ENCODE measurements at regions of chr15 and their contacts with region 1.

Region 1: GRCh38 chr15:100602064-100602822 is at the starts of genes ASB7 and LINS1:
- DNase-seq: peak; percentile 97
- ATAC-seq: peak; percentile 87
- H3K4me3 Mint-ChIP-seq: no peak within 1 kb of the TSS
- H3K27ac Mint-ChIP-seq: no peak within 1 kb of the TSS
- H3K4me1 Mint-ChIP-seq: peaks cover 46% of the 10 kb centered on the region
- H3K27me3 Mint-ChIP-seq: no peaks in the 10 kb centered on the region
- CTCF ChIP-seq: no peak
- total RNA-seq, gene ASB7: 18.3 and 21.3 TPM in 2 replicates
- total RNA-seq, gene LINS1: 31.9 and 33.3 TPM in 2 replicates

Region 2: GRCh38 chr15:99090011-99090699 is 1512.1 kb before region 1 on chr15:
- CTCF ChIA-PET with region 1: no interaction called
- POLR2A ChIA-PET with region 1: no interaction called
- intact Hi-C with region 1: loop called (anchors 1 kb)
- DNase-seq: peak; percentile 36
- ATAC-seq: peak; percentile 100
- H3K4me3 Mint-ChIP-seq: peak overlapping the region; percentile 52
- H3K27ac Mint-ChIP-seq: peak overlapping the region; percentile 67
- H3K4me1 Mint-ChIP-seq: peaks cover 15% of the 10 kb centered on the region
- H3K27me3 Mint-ChIP-seq: peaks cover 6% of the 10 kb centered on the region
- CTCF ChIP-seq: no peak

Region 3: GRCh38 chr15:99928429-99928981 is 673.7 kb before region 1 on chr15:
- CTCF ChIA-PET with region 1: no interaction called
- POLR2A ChIA-PET with region 1: interaction called, 3 read pairs
- intact Hi-C with region 1: loop called (anchors 2 kb)
- DNase-seq: peak; percentile 85
- ATAC-seq: peak; percentile 92
- H3K4me3 Mint-ChIP-seq: peak overlapping the region; percentile 86
- H3K27ac Mint-ChIP-seq: peak overlapping the region; percentile 78
- H3K4me1 Mint-ChIP-seq: peaks cover 16% of the 10 kb centered on the region
- H3K27me3 Mint-ChIP-seq: peaks cover 4% of the 10 kb centered on the region
- CTCF ChIP-seq: no peak

Region 4: GRCh38 chr15:100580414-100580813 is 21.8 kb before region 1 on chr15:
- CTCF ChIA-PET with region 1: no interaction called
- POLR2A ChIA-PET with region 1: no interaction called
- intact Hi-C with region 1: no loop called
- DNase-seq: no peak
- ATAC-seq: no peak
- H3K4me3 Mint-ChIP-seq: no peak overlapping the region
- H3K27ac Mint-ChIP-seq: no peak overlapping the region
- H3K4me1 Mint-ChIP-seq: peaks cover 5% of the 10 kb centered on the region
- H3K27me3 Mint-ChIP-seq: no peaks in the 10 kb centered on the region
- CTCF ChIP-seq: no peak

Region 5: GRCh38 chr15:100627789-100628395 is 25.6 kb after region 1 on chr15:
- CTCF ChIA-PET with region 1: no interaction called
- POLR2A ChIA-PET with region 1: interaction called, 3 read pairs
- intact Hi-C with region 1: loop called (anchors 2 kb)
- DNase-seq: no peak
- ATAC-seq: peak; percentile 79
- H3K4me3 Mint-ChIP-seq: no peak overlapping the region
- H3K27ac Mint-ChIP-seq: no peak overlapping the region
- H3K4me1 Mint-ChIP-seq: peaks cover 4% of the 10 kb centered on the region
- H3K27me3 Mint-ChIP-seq: no peaks in the 10 kb centered on the region
- CTCF ChIP-seq: peak; percentile 84

Region 6: GRCh38 chr15:100759698-100760356 is 157.6 kb after region 1 on chr15:
- CTCF ChIA-PET with region 1: no interaction called
- POLR2A ChIA-PET with region 1: no interaction called
- intact Hi-C with region 1: no loop called
- DNase-seq: no peak
- ATAC-seq: no peak
- H3K4me3 Mint-ChIP-seq: no peak overlapping the region
- H3K27ac Mint-ChIP-seq: no peak overlapping the region
- H3K4me1 Mint-ChIP-seq: no peaks in the 10 kb centered on the region
- H3K27me3 Mint-ChIP-seq: peaks cover 34% of the 10 kb centered on the region
- CTCF ChIP-seq: no peak

Region 7: GRCh38 chr15:100958326-100959065 is 356.3 kb after region 1 on chr15:
- CTCF ChIA-PET with region 1: no interaction called
- POLR2A ChIA-PET with region 1: no interaction called
- intact Hi-C with region 1: no loop called
- DNase-seq: no peak
- ATAC-seq: no peak
- H3K4me3 Mint-ChIP-seq: no peak overlapping the region
- H3K27ac Mint-ChIP-seq: no peak overlapping the region
- H3K4me1 Mint-ChIP-seq: peaks cover 30% of the 10 kb centered on the region
- H3K27me3 Mint-ChIP-seq: no peaks in the 10 kb centered on the region
- CTCF ChIP-seq: no peak

Region 8: DNA sequence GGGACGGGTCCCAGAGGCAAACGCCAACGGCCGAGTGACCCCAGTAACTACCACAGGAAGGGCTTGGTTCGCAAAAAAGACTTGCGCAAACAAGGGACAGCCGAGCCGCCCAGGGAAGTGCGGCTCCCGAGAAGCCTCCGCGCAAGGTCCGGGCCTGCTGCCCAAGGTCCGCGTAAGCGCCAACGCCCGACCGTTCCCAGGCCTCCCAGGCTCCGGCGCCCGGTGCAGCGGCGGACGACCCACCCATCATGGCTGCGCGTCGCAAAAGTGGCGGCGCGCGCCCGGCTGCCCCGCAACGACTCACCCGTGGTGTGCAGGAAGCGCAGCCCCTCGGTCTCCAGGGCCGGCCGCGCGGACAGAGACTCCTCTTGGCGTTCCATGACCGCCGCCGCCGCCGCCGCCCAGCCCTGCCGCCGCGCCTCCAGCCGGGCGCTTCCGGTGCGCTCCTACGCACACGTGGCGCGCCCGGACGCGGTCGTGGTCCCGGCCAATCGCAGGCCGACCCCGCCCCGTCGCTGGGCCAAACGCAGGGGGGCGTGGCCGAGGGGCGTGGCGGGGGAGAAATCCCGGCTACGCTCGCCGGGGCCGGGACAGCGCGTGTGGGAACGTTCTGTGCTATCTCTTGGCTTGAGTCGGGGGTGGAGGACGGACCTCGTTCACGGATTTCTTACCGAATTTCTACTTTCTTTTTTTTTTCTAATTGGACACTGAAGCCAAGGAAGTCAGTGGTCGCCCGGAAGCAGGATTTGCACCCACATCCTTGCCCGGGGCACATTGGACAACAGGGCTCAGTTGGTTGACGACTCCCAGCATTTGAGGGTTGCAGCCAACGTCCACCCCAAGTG is 675.0 kb after region 1 on chr15 and contains the start of gene SELENOS:
- CTCF ChIA-PET with region 1: no interaction called
- POLR2A ChIA-PET with region 1: no interaction called
- intact Hi-C with region 1: loop called (anchors 1 kb)
- DNase-seq: peak; percentile 91
- ATAC-seq: peak; percentile 97
- H3K4me3 Mint-ChIP-seq: peak within 1 kb of the TSS; percentile 90
- H3K27ac Mint-ChIP-seq: peak within 1 kb of the TSS; percentile 70
- H3K4me1 Mint-ChIP-seq: peaks cover 14% of the 10 kb centered on the region
- H3K27me3 Mint-ChIP-seq: no peaks in the 10 kb centered on the region
- CTCF ChIP-seq: no peak
- total RNA-seq, gene SELENOS: 23.7 and 24.5 TPM in 2 replicates

Region 9: DNA sequence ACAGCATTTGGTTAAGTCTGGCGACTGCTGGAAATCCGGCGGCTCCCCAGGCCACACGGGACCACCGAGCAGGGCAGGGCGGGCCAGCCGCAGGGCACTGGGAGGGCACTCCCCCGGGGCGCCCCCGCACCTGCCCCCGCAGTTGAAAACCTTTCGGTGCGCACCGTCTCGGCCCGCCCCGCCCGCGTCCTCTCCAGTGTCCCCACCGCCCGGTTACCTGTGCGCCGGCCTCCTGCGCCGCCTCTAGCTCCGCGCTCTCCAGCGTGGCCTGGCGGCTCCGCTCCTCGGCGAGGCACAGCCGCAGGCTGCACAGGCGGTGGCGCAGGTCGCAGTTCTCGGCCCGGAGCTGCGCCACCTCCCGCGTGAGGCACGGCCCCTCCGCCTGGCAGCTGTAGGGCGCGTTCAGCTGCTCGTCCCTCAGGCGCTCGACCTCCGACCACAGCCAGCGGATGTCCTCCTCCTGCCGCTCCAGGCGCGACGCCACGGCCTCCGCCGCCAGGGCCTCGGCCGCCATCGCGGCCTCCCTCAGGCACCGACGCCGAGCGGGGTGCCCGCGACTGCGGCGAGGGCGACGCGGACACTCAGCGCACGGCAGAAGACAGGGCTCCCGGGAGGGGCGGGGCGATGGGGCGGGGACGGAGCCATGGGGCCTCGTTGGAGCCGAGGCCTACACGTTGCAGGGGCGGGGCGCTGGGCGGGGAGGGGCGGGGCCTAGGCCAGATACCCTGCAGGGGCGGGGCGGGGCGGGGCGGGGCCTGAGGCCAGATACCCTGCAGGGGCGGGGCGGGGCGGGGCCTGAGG is 1121.8 kb after region 1 on chr15 and contains the start of gene TARS3:
- CTCF ChIA-PET with region 1: no interaction called
- POLR2A ChIA-PET with region 1: no interaction called
- intact Hi-C with region 1: loop called (anchors 1 kb)
- DNase-seq: peak; percentile 83
- ATAC-seq: peak; percentile 89
- H3K4me3 Mint-ChIP-seq: peak within 1 kb of the TSS; percentile 82
- H3K27ac Mint-ChIP-seq: peak within 1 kb of the TSS; percentile 85
- H3K4me1 Mint-ChIP-seq: peaks cover 15% of the 10 kb centered on the region
- H3K27me3 Mint-ChIP-seq: no peaks in the 10 kb centered on the region
- CTCF ChIP-seq: no peak
- total RNA-seq, gene TARS3: 12.0 and 13.0 TPM in 2 replicates